Caco-2 (cell line): ENCODE measurements at regions of chr18 and their contacts with region 1.

Region 1: DNA sequence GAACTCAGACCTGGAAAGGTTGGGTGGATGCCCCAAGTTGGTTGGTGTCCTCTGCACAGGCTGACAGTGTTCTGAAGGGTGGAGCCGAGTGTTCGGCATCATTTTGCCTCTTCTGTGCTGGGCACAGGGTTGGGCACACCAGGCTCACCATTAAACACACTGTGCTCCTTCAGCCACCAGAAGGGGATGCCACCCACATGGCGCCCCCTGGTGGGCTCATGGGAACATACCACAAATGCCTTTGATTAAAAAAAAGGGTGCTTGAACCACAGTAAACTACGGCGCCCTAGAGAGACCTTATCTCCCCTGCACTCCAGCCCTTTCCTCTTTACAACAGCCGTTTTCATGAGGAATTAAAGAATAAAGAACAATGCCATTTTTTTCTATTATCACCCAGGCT is 89.4 kb downstream of the CELF4 start:
- DNase-seq: peak; percentile 15 to 30
- H3K4me3 ChIP-seq: no peak overlapping the region
- H3K4me3 Mint-ChIP-seq: no peak overlapping the region
- H3K27ac Mint-ChIP-seq: no peak overlapping the region
- H3K4me1 ChIP-seq: no peaks in the 10 kb centered on the region
- H3K4me1 Mint-ChIP-seq: no peaks in the 10 kb centered on the region
- H3K27me3 ChIP-seq: no peaks in the 10 kb centered on the region
- H3K27me3 Mint-ChIP-seq: peaks cover 14% of the 10 kb centered on the region
- CTCF ChIP-seq: peak; percentile 30 to 38

Region 2: GRCh38 chr18:37393945-37394609 is 82.1 kb before region 1 on chr18:
- CTCF ChIA-PET with region 1: no interaction called
- POLR2A ChIA-PET with region 1: no interaction called
- intact Hi-C with region 1: loop called (anchors 10 kb)
- DNase-seq: peak; percentile 45 to 46
- H3K4me3 ChIP-seq: peak overlapping the region; percentile 25
- H3K4me3 Mint-ChIP-seq: no peak overlapping the region
- H3K27ac Mint-ChIP-seq: no peak overlapping the region
- H3K4me1 ChIP-seq: no peaks in the 10 kb centered on the region
- H3K4me1 Mint-ChIP-seq: no peaks in the 10 kb centered on the region
- H3K27me3 ChIP-seq: no peaks in the 10 kb centered on the region; the same call in 1 of the 2 replicates
- H3K27me3 Mint-ChIP-seq: peaks cover 5% of the 10 kb centered on the region
- CTCF ChIP-seq: no peak

Region 3: GRCh38 chr18:37440206-37440605 is 36.0 kb before region 1 on chr18:
- CTCF ChIA-PET with region 1: no interaction called
- POLR2A ChIA-PET with region 1: no interaction called
- intact Hi-C with region 1: loop called (anchors 5 kb)
- DNase-seq: no peak
- H3K4me3 ChIP-seq: no peak overlapping the region
- H3K4me3 Mint-ChIP-seq: no peak overlapping the region
- H3K27ac Mint-ChIP-seq: no peak overlapping the region
- H3K4me1 ChIP-seq: no peaks in the 10 kb centered on the region
- H3K4me1 Mint-ChIP-seq: no peaks in the 10 kb centered on the region
- H3K27me3 ChIP-seq: no peaks in the 10 kb centered on the region; the same call in 1 of the 2 replicates
- H3K27me3 Mint-ChIP-seq: peaks cover 12% of the 10 kb centered on the region
- CTCF ChIP-seq: no peak

Region 4: DNA sequence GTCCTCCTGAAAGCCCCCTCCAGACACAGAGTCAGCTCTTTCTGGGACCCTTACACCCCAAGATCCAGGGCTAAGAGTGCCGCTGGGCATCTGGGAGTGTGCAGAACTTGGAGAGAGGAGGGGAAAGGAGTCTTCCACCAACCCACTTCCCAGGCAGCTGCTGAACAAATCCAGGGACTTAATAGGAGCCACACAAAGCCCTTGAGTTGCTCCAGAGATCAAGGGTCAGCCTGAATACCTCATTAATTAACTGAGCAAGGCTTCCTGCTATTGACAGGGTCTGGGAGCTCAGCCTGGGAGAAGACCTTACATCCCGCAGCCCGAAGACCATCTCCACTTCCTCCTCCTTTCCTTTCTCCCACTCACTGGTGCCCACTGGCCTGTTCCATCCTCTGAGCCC is 18.8 kb before region 1 on chr18:
- CTCF ChIA-PET with region 1: interaction called, 10 read pairs
- POLR2A ChIA-PET with region 1: no interaction called
- intact Hi-C with region 1: no loop called
- DNase-seq: no peak
- H3K4me3 ChIP-seq: no peak overlapping the region
- H3K4me3 Mint-ChIP-seq: no peak overlapping the region
- H3K27ac Mint-ChIP-seq: no peak overlapping the region
- H3K4me1 ChIP-seq: no peaks in the 10 kb centered on the region
- H3K4me1 Mint-ChIP-seq: peaks cover 5% of the 10 kb centered on the region
- H3K27me3 ChIP-seq: no peaks in the 10 kb centered on the region
- H3K27me3 Mint-ChIP-seq: peaks cover 8% of the 10 kb centered on the region
- CTCF ChIP-seq: no peak

Region 5: GRCh38 chr18:37529863-37530262 is 53.7 kb after region 1 on chr18:
- CTCF ChIA-PET with region 1: no interaction called
- POLR2A ChIA-PET with region 1: no interaction called
- intact Hi-C with region 1: no loop called
- DNase-seq: no peak
- H3K4me3 ChIP-seq: no peak overlapping the region
- H3K4me3 Mint-ChIP-seq: no peak overlapping the region
- H3K27ac Mint-ChIP-seq: no peak overlapping the region
- H3K4me1 ChIP-seq: no peaks in the 10 kb centered on the region
- H3K4me1 Mint-ChIP-seq: no peaks in the 10 kb centered on the region
- H3K27me3 ChIP-seq: no peaks in the 10 kb centered on the region
- H3K27me3 Mint-ChIP-seq: peaks cover 11% of the 10 kb centered on the region
- CTCF ChIP-seq: no peak